Heart left ventricle (tissue), 16 donors: ENCODE measurements at regions of chr12 and their contacts with region 1.

Region 1: GRCh38 chr12:49866859-49867579 is 24.1 kb upstream of the BCDIN3D start:
- DNase-seq: peak; percentile 67 to 79 (median 73)
- ATAC-seq: peak in 2 of 4 donors; percentile 17
- H3K4me3 ChIP-seq: no peak overlapping the region
- H3K27ac ChIP-seq: no peak overlapping the region
- H3K4me1 ChIP-seq: peaks cover 4 to 37% (median 29%) of the 10 kb centered on the region in 12 donors
- H3K27me3 ChIP-seq: peaks cover 0 to 6% (median 0%) of the 10 kb centered on the region in 9 donors
- CTCF ChIP-seq: peak; percentile 94 to 99 (median 98)
- POLR2A ChIP-seq: no peak

Region 2: DNA sequence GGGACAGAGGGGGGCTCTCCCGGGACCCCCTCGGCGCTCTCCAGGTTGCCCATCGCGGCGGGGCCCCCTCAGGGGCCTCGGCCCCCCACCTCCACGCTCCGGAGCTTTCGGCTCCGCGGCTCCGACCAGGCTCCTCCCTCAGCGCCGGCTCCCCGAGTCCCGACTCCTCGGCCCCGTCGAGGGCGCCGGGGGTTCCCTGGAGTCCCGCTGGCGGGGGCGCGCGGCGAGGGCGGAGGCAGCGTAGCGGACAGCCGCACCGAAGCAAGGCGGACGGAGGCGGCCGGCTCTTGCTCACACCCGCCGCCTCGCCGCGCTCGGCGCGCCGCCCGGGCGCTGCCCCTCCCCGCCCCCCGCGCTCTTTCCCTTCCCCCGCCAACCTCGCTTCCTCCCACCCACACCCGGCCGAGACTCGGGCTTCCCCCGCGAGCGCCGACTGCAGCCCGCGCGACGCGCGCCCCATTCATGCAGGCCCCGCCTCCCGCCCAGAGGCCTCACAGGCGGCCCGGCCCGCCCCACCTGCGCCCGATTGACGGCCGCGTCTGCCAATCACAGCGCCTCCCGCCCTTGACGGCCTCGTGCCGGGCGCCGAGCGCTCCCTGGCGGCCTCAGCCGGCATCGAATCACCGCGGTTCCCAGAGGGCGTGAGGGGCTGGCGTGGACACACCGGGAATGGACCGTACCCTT is 159.7 kb before region 1 on chr12 and contains the start of gene FMNL3:
- intact Hi-C with region 1: no loop called
- DNase-seq: peak; percentile 98 to 100 (median 98)
- ATAC-seq: peak; percentile 95 to 99 (median 96)
- H3K4me3 ChIP-seq: peak within 1 kb of the TSS; percentile 69 to 97 (median 86)
- H3K27ac ChIP-seq: peak within 1 kb of the TSS; percentile 89 to 99 (median 97)
- H3K4me1 ChIP-seq: peaks cover 0 to 46% (median 32%) of the 10 kb centered on the region in 12 donors
- H3K27me3 ChIP-seq: peaks cover 0 to 7% (median 0%) of the 10 kb centered on the region in 9 donors
- CTCF ChIP-seq: peak; percentile 92 to 99 (median 96)
- POLR2A ChIP-seq: peak in 1 of 2 donors; percentile 35
- total RNA-seq, gene FMNL3: 8.7 to 33.9 (median 14.3) TPM

Region 3: GRCh38 chr12:49920241-49920921 is 53.4 kb after region 1 on chr12:
- intact Hi-C with region 1: no loop called
- DNase-seq: peak in 4 of 5 donors; percentile 37 to 60 (median 48)
- ATAC-seq: peak in 3 of 4 donors; percentile 7 to 71 (median 60)
- H3K4me3 ChIP-seq: no peak overlapping the region
- H3K27ac ChIP-seq: peak overlapping the region in 6 of 12 donors; percentile 12 to 52 (median 33)
- H3K4me1 ChIP-seq: peaks cover 0 to 28% (median 13%) of the 10 kb centered on the region in 12 donors
- H3K27me3 ChIP-seq: peaks cover 0 to 11% (median 0%) of the 10 kb centered on the region in 9 donors
- CTCF ChIP-seq: no peak
- POLR2A ChIP-seq: no peak

Region 4: GRCh38 chr12:50050410-50051098 is 183.5 kb after region 1 on chr12:
- intact Hi-C with region 1: loop called in 9 of 10 experiments (anchors 5 to 10 kb)
- DNase-seq: peak; percentile 44 to 78 (median 72)
- ATAC-seq: peak; percentile 40 to 87 (median 82)
- H3K4me3 ChIP-seq: peak overlapping the region in 10 of 12 donors; percentile 21 to 50 (median 38)
- H3K27ac ChIP-seq: peak overlapping the region in 5 of 12 donors; percentile 2 to 38 (median 10)
- H3K4me1 ChIP-seq: peaks cover 0 to 16% (median 4%) of the 10 kb centered on the region in 12 donors
- H3K27me3 ChIP-seq: peaks cover 0 to 8% (median 0%) of the 10 kb centered on the region in 9 donors
- CTCF ChIP-seq: no peak
- POLR2A ChIP-seq: no peak

Region 5: DNA sequence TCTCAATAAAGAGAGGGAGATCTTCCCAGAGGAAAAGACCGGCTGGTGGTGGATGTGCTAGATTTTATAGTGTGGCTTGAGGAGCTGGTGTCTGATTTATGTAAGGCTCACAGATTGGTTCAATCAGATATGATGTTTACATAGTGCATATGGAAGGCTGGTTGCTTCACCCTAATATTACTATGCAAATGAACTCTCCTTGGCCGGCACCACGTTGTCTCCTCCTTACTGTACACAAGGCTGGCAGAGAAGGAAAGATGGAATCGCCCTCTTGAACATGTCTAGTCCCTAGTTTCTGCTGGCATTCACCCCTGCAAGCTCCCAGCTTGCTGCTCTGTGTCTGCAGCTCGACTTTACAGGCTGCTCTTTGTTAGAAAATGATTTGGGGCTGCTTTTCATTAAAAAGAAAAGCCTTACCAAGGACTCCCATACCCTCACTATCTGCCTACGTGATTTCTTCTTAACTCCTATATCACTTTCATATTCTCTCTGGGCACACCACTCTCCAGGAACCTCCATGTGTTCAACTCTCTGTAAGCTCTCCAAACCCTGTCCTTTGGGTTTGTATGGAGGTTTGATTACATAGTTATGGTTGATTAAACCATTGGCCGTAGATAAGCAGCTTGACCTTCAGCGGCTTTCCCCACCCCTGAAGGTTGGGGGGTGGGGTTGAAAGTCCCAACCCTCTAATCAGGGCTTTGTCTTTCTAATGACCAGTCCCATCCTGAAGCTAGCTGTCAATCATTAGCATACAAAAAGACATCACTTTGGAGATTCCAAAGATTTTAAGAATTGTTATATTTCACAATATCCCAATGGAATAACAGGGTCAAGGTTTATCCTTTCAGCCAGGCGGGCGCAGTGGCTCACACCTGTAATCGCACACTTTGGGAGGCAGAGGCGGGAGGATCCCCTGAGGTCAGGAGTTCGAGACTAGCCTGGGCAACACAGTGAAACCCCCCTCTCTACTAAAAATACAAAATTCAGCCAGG is 520.8 kb after region 1 on chr12:
- intact Hi-C with region 1: no loop called
- DNase-seq: no peak
- ATAC-seq: no peak
- H3K4me3 ChIP-seq: no peak overlapping the region
- H3K27ac ChIP-seq: no peak overlapping the region
- H3K4me1 ChIP-seq: no peaks in the 10 kb centered on the region
- H3K27me3 ChIP-seq: no peaks in the 10 kb centered on the region
- CTCF ChIP-seq: no peak
- POLR2A ChIP-seq: no peak